ENCODE measurements at regions of chr6 and their contacts with region 1.

Region 1: DNA sequence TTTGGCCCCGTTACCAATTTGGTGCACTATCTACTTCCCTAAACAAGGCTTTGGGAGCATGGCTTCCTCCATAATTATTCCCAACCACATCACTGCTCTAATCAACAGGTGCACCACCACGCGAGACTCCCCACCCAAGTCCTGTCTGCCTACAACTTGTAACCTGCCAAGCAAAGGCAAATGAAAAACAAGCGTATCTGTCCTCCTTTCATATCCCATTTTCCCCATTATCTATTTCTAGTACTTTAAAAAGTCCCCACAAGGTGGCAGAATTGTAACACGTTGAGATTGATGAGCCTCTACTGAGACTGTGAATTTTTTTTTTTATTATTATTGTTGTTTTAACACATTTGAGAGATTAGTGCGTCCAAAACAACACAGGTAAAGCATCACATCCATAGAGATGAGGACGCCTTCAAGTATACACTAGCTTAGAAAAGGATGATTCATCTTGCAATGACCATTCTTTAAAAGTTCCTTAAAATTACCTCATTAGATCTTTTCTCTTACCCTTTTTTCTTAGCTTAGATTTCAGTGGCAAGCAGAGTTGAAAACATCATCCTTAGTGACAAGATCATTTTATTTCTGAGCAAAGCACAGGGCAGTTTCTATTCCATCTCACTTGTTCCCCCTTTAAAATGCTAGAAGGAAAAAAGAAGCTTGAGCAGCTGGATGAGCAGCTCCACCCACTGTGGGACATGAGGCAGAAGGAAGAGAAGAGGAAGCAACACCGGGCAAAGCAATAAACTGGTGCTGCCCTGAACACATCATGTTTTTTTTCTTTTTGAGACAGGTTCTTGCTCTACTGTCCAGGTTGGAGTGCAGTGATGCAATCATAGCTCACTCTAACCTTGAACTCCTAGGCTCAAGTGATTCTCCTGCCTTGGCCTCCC is 210.8 kb downstream of the ARHGAP18 start:
- DNase-seq: peak; percentile 58
- ATAC-seq: peak; percentile 68
- H3K4me3 ChIP-seq: no peak overlapping the region
- H3K27ac ChIP-seq: no peak overlapping the region
- H3K4me1 ChIP-seq: peaks cover 33% of the 10 kb centered on the region
- H3K27me3 ChIP-seq: no peaks in the 10 kb centered on the region
- CTCF ChIP-seq: peak; percentile 78
- EP300 ChIP-seq: 0 out of 4 replicates have a peak, but pooled peaks of 1 of the 2 experiments have one; percentile 8
- POLR2A ChIP-seq: no peak
- RAD21 ChIP-seq: peak; percentile 62; the same call in 1 of the 2 replicates

Region 2: GRCh38 chr6:129317931-129318820 is 181.0 kb before region 1 on chr6:
- CTCF ChIA-PET with region 1: no interaction called
- POLR2A ChIA-PET with region 1: no interaction called
- in situ Hi-C with region 1: no loop called
- intact Hi-C with region 1: no loop called
- DNase-seq: no peak
- ATAC-seq: no peak
- H3K4me3 ChIP-seq: no peak overlapping the region
- H3K27ac ChIP-seq: no peak overlapping the region
- H3K4me1 ChIP-seq: no peaks in the 10 kb centered on the region
- H3K27me3 ChIP-seq: no peaks in the 10 kb centered on the region
- CTCF ChIP-seq: no peak
- EP300 ChIP-seq: no peak
- POLR2A ChIP-seq: no peak
- RAD21 ChIP-seq: no peak

Region 3: GRCh38 chr6:129575378-129576118 is 76.4 kb after region 1 on chr6:
- CTCF ChIA-PET with region 1: interaction called, 21 read pairs
- POLR2A ChIA-PET with region 1: no interaction called
- in situ Hi-C with region 1: no loop called
- intact Hi-C with region 1: loop called (anchors 1 kb)
- DNase-seq: peak; percentile 42
- ATAC-seq: peak; percentile 80
- H3K4me3 ChIP-seq: no peak overlapping the region
- H3K27ac ChIP-seq: no peak overlapping the region
- H3K4me1 ChIP-seq: no peaks in the 10 kb centered on the region
- H3K27me3 ChIP-seq: no peaks in the 10 kb centered on the region
- CTCF ChIP-seq: peak; percentile 58
- EP300 ChIP-seq: no peak
- POLR2A ChIP-seq: no peak
- RAD21 ChIP-seq: no peak

Region 4: GRCh38 chr6:129730477-129731165 is 231.4 kb after region 1 on chr6:
- CTCF ChIA-PET with region 1: interaction called, 4 read pairs
- POLR2A ChIA-PET with region 1: no interaction called
- in situ Hi-C with region 1: no loop called
- intact Hi-C with region 1: loop called (anchors 2 kb)
- DNase-seq: peak; percentile 58
- ATAC-seq: peak; percentile 77
- H3K4me3 ChIP-seq: peak overlapping the region in 1 of 3 experiments; percentile 17; a peak in 1 of 6 replicates
- H3K27ac ChIP-seq: no peak overlapping the region
- H3K4me1 ChIP-seq: peaks cover 36% of the 10 kb centered on the region
- H3K27me3 ChIP-seq: no peaks in the 10 kb centered on the region
- CTCF ChIP-seq: peak; percentile 87
- EP300 ChIP-seq: no peak
- POLR2A ChIP-seq: no peak
- RAD21 ChIP-seq: peak; percentile 92

Region 5: DNA sequence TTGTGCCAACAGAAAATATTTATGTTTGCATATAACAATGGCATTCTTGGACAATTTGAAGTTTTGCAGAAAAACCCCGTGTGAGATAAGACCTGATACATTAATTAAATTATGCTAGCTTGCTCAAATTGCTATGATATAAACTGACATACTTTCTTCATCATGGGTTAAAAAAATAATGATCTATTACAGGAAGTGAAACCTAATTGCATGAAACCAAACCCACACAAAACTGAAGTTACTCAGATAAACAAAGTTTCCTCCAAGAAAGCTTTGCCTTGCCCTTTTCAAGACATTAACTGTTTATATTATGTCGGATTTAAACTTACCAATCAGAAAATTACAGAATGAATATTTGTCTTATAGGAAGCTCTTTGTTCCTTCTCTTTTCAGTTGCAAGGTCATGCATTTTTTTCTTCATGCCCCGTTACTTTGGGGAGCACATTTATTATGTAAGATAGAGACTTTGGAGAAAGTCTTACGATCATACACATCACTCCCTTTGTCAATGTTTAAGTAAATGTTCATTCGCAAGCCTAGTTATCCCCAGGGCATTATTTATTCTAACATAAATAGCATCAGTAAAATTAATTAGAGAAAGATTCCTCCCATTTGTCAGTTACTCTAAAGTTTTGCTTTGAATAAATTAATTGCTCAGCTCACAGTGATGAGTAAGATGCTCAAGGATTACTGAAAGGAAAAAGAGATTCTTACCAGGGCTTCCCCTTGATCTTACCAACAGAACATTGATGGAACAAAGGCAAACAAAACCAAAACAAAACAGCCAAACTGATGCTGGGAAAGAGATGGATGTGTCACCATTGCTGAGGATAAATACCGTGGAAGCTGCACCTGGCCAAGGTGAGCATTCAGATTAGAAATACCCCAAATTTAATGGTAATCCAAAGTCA is 376.7 kb after region 1 on chr6:
- CTCF ChIA-PET with region 1: no interaction called
- POLR2A ChIA-PET with region 1: no interaction called
- in situ Hi-C with region 1: no loop called
- intact Hi-C with region 1: no loop called
- DNase-seq: no peak
- ATAC-seq: no peak
- H3K4me3 ChIP-seq: no peak overlapping the region
- H3K27ac ChIP-seq: no peak overlapping the region
- H3K4me1 ChIP-seq: no peaks in the 10 kb centered on the region
- H3K27me3 ChIP-seq: peaks cover 0 to 3% of the 10 kb centered on the region in 2 experiments; a peak in 1 of 5 replicates
- CTCF ChIP-seq: no peak
- EP300 ChIP-seq: no peak
- POLR2A ChIP-seq: no peak
- RAD21 ChIP-seq: no peak

Region 6: GRCh38 chr6:129936329-129937165 is 437.4 kb after region 1 on chr6:
- CTCF ChIA-PET with region 1: interaction called, 18 read pairs
- POLR2A ChIA-PET with region 1: no interaction called
- in situ Hi-C with region 1: loop called (anchors 25 kb)
- intact Hi-C with region 1: loop called (anchors 1 kb)
- DNase-seq: peak; percentile 49
- ATAC-seq: peak; percentile 77
- H3K4me3 ChIP-seq: no peak overlapping the region
- H3K27ac ChIP-seq: no peak overlapping the region
- H3K4me1 ChIP-seq: no peaks in the 10 kb centered on the region
- H3K27me3 ChIP-seq: peaks cover 0 to 8% of the 10 kb centered on the region in 2 experiments; a peak in 2 of 5 replicates
- CTCF ChIP-seq: peak; percentile 75
- EP300 ChIP-seq: no peak
- POLR2A ChIP-seq: no peak
- RAD21 ChIP-seq: no peak